ENCODE measurements at regions of chr12 and their contacts with region 1.

Region 1: GRCh38 chr12:9634177-9634803 is 26.6 kb upstream of the KLRB1 start:
- DNase-seq: peak; percentile 94
- H3K4me3 Mint-ChIP-seq: peak overlapping the region; percentile 64
- H3K27ac Mint-ChIP-seq: peak overlapping the region; percentile 57
- H3K4me1 Mint-ChIP-seq: peaks cover 50% of the 10 kb centered on the region
- H3K27me3 Mint-ChIP-seq: peaks cover 4% of the 10 kb centered on the region

Region 2: GRCh38 chr12:9707864-9708808 is 73.8 kb after region 1 on chr12:
- intact Hi-C with region 1: loop called (anchors 1 kb)
- DNase-seq: peak; percentile 89
- H3K4me3 Mint-ChIP-seq: peak overlapping the region; percentile 77
- H3K27ac Mint-ChIP-seq: peak overlapping the region; percentile 86
- H3K4me1 Mint-ChIP-seq: peaks cover 44% of the 10 kb centered on the region
- H3K27me3 Mint-ChIP-seq: no peaks in the 10 kb centered on the region